Activated CD8-positive, alpha-beta T cell treated with anti-CD3 and anti-CD28 coated beads for 36 hours (primary cell): ENCODE measurements at regions of chr6 and their contacts with region 1.

Region 1: GRCh38 chr6:28489366-28490204 is 26.0 kb downstream of the GPX6 start:
- DNase-seq: peak; percentile 72
- ATAC-seq: peak; percentile 80
- H3K4me3 Mint-ChIP-seq: peak overlapping the region; percentile 71
- H3K27ac Mint-ChIP-seq: peak overlapping the region; percentile 74
- H3K4me1 Mint-ChIP-seq: peaks cover 25% of the 10 kb centered on the region
- H3K27me3 Mint-ChIP-seq: peaks cover 58% of the 10 kb centered on the region
- CTCF ChIP-seq: no peak

Region 2: DNA sequence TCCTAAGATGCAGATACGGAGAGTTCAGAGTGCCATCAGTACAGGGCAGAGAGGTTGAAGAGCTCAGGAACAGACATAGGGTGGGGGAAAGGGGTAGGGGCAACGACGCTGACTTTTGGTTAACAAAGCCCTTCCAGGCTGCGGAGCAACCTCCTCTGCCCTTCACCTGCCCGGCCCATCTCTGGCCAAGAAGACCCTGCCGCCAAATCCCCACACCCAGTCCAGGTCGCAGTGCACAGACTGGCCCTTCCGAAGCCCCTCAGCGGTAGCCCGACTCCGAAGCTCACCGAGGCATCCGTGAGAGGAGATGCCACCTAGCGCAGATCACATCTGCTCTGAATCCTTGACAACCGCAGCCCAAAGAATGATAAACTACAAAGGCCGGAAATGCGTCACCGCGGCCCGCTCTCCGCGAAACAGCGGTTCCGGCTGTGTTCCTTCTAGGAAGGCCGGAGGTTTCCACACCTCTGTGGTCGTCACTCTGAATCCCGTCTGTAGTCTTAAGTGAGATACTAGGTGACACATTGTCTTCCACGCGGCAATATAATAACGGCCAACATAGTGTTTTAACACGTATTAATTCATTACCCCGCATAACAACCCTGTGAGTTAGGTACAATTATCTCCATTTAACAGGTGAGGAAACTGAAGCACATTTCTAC is 46.3 kb before region 1 on chr6 and contains the start of gene ZSCAN23:
- CTCF ChIA-PET with region 1: no interaction called
- POLR2A ChIA-PET with region 1: no interaction called
- intact Hi-C with region 1: no loop called
- DNase-seq: peak; percentile 94
- ATAC-seq: peak; percentile 85
- H3K4me3 Mint-ChIP-seq: peak within 1 kb of the TSS; percentile 98
- H3K27ac Mint-ChIP-seq: peak within 1 kb of the TSS; percentile 96
- H3K4me1 Mint-ChIP-seq: peaks cover 28% of the 10 kb centered on the region
- H3K27me3 Mint-ChIP-seq: peaks cover 32% of the 10 kb centered on the region
- CTCF ChIP-seq: no peak
- total RNA-seq, gene ZSCAN23: 1.1 to 1.6 TPM

Region 3: DNA sequence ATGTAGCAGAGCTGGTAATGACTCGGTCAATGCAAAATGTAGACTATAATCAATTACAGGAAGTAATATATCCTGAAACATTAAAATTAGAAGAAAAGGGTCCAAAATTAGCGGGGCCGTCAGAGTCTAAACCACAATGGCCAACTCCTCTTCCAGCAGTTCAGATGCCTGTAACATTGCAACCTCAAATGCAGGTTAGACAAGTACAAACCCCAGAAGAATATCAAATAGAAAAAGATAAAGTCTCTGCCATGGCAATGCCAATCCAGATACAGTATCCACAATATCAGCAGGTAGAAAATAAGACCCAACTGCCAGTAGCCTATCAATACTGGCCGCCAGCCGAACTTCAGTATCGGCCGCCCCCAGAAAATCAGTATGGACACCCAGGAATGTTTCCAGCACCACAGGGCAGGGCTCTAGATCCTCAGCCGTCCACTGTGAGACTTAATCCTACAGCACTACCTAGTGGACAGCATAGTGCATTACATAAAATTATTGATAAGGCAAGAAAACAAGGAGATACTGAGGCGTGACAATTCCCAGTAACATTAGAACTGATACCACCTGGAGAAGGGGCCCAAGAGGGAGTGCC is 194.5 kb after region 1 on chr6:
- CTCF ChIA-PET with region 1: no interaction called
- POLR2A ChIA-PET with region 1: no interaction called
- intact Hi-C with region 1: loop called (anchors 10 kb)
- DNase-seq: no peak
- ATAC-seq: peak; percentile 64
- H3K4me3 Mint-ChIP-seq: no peak overlapping the region
- H3K27ac Mint-ChIP-seq: no peak overlapping the region
- H3K4me1 Mint-ChIP-seq: no peaks in the 10 kb centered on the region
- H3K27me3 Mint-ChIP-seq: peaks cover 77% of the 10 kb centered on the region
- CTCF ChIP-seq: peak; percentile 72